Activated T-helper 1 cell treated with anti-CD3 and anti-CD28 coated beads, Interleukin-12 subunit alpha, Interleukin-12 subunit beta, Interleukin-2, Interleukin-4 antibody, amounts not matched to agents 30 ng/mL and 10 ng/mL and 1 ng/mL, durations not matched to agents 14 hours and 24 hours and 36 hours (primary cell): ENCODE measurements at regions of chr19 and their contacts with region 1.

Region 1: DNA sequence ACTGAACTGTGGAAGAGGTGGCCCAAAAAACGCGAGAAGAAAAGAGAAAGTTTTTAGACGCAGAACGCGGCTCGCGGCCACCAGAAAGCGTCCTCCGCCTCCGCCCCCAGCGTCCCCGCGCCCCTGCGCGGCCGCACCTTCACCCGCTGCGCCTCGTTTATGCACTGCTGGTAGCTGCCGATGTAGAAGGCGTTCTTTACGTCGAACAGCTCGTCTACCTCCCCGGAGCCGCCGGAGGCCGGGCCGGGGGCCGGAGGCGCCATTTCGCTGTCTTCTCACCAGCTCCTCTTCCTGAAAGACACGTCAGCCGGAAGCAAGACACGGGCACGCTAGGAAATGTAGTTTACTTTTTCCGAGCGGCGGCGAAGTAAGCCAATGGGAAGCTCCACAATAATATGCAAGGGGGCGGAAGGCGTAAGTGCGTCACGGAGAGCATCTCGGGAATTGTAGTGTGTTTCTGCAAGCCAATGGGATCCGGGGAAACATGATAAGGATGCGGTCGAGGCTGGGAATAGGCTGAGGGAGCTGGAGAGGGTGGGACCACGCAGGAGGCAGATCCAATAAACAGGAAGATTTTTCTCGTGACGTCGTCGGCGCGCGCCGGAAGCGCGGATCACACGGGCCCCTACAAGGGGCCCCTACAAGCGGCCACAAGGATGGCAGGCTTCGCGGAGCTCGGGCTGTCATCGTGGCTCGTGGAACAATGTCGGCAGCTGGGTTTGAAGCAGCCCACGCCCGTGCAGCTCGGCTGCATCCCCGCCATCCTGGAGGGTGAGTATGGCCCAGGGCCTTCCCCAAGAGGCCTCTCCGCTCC is at the starts of genes COPE and DDX49:
- DNase-seq: peak; percentile 97
- H3K4me3 Mint-ChIP-seq: peak within 1 kb of the TSS; percentile 94
- H3K27ac Mint-ChIP-seq: peak within 1 kb of the TSS; percentile 84
- H3K4me1 Mint-ChIP-seq: peaks cover 21% of the 10 kb centered on the region
- H3K27me3 Mint-ChIP-seq: no peaks in the 10 kb centered on the region
- total RNA-seq, gene COPE: 221 and 229 TPM in 2 replicates
- total RNA-seq, gene DDX49: 101 and 114 TPM in 2 replicates

Region 2: DNA sequence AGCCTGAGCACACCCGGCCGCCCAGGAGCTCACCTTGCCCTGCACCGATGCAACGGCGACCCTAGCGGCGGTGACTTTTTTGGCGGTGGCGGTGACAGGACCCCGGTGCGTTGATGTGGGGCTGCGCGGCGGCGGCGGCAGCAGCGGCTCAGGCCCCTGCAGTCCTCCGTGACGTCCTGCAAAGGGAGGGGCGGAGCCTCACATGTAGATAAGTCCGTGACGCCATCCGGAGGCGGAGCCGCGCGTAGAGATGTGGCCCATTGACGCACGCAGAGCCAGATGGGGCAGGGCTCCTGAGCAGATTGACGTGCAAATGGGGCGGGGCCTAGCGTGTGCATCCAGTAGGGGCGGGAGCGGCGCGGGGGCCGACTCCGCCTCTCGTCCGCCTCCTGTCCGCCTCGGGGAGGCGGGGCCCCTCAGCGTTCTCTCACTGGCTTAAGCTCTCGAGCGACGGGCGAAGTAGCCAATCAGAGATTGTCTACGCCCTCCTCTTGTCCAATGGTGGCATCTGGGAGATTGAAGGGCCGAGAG is 715.4 kb before region 1 on chr19 and contains the start of gene RAB3A:
- intact Hi-C with region 1: loop called (anchors 1 kb)
- DNase-seq: peak; percentile 99
- H3K4me3 Mint-ChIP-seq: peak within 1 kb of the TSS; percentile 95
- H3K27ac Mint-ChIP-seq: peak within 1 kb of the TSS; percentile 86
- H3K4me1 Mint-ChIP-seq: peaks cover 18% of the 10 kb centered on the region
- H3K27me3 Mint-ChIP-seq: peaks cover 4% of the 10 kb centered on the region
- total RNA-seq, gene RAB3A: 7.2 and 11.0 TPM in 2 replicates

Region 3: GRCh38 chr19:18557474-18558201 is 361.7 kb before region 1 on chr19 and contains the start of gene KXD1:
- intact Hi-C with region 1: loop called (anchors 1 kb)
- DNase-seq: peak; percentile 98
- H3K4me3 Mint-ChIP-seq: peak within 1 kb of the TSS; percentile 93
- H3K27ac Mint-ChIP-seq: peak within 1 kb of the TSS; percentile 92
- H3K4me1 Mint-ChIP-seq: peaks cover 20% of the 10 kb centered on the region
- H3K27me3 Mint-ChIP-seq: no peaks in the 10 kb centered on the region
- total RNA-seq, gene KXD1: 128 and 133 TPM in 2 replicates

Region 4: DNA sequence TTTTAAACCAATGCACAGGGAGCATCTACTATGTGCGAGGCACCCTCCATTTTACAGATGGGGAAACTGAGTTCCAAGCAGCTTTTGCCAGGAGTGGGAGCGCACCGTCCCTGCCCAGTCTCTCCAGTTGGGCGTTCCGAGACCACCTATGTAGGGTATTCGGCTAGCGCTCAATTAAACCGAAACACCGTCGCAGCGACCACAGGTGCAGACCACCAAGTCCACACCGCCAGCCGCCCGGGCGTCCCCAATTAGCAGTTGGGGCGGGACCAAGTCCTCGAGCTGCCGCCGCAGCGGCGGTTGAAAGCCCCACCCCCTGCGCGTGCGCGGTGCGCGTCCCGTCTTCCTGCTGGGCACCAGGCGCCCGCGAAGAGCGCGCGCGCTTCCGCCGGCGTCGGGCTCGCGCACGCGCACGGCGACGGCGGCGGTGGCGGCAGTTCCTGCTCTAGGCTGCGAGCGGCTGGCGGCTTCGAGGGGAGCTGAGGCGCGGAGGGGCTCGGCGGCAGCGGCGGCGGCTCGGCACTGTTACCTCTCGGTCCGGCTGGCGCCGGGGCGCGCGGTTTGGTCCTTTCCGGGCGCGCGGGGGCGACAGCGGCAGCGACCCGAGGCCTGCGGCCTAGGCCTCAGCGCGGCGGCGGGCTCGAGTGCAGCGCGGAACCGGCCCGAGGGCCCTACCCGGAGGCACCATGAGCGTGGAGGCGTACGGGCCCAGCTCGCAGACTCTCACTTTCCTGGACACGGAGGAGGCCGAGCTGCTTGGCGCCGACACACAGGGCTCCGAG is 87.6 kb before region 1 on chr19 and contains the start of gene UPF1:
- intact Hi-C with region 1: loop called (anchors 1 kb)
- DNase-seq: peak; percentile 96
- H3K4me3 Mint-ChIP-seq: peak within 1 kb of the TSS; percentile 96
- H3K27ac Mint-ChIP-seq: peak within 1 kb of the TSS; percentile 95
- H3K4me1 Mint-ChIP-seq: peaks cover 35% of the 10 kb centered on the region
- H3K27me3 Mint-ChIP-seq: peaks cover 14% of the 10 kb centered on the region
- total RNA-seq, gene UPF1: 102 and 113 TPM in 2 replicates

Region 5: GRCh38 chr19:19138169-19138981 is 219.1 kb after region 1 on chr19 and contains the start of gene TMEM161A:
- intact Hi-C with region 1: loop called (anchors 1 kb)
- DNase-seq: peak; percentile 97
- H3K4me3 Mint-ChIP-seq: peak within 1 kb of the TSS; percentile 92
- H3K27ac Mint-ChIP-seq: peak within 1 kb of the TSS; percentile 93
- H3K4me1 Mint-ChIP-seq: peaks cover 22% of the 10 kb centered on the region
- H3K27me3 Mint-ChIP-seq: peaks cover 3% of the 10 kb centered on the region
- total RNA-seq, gene TMEM161A: 46.0 and 48.9 TPM in 2 replicates